ENCODE measurements at regions of chr22 and their contacts with region 1.

Region 1: GRCh38 chr22:24423519-24424000 is 3.8 kb upstream of the ADORA2A start:
- DNase-seq: peak; percentile 85
- ATAC-seq: peak; percentile 26
- H3K4me3 Mint-ChIP-seq: peak overlapping the region; percentile 68
- H3K27ac Mint-ChIP-seq: peak overlapping the region; percentile 24
- H3K4me1 Mint-ChIP-seq: peaks cover 47% of the 10 kb centered on the region
- H3K27me3 Mint-ChIP-seq: no peaks in the 10 kb centered on the region
- CTCF ChIP-seq: peak; percentile 24

Region 2: DNA sequence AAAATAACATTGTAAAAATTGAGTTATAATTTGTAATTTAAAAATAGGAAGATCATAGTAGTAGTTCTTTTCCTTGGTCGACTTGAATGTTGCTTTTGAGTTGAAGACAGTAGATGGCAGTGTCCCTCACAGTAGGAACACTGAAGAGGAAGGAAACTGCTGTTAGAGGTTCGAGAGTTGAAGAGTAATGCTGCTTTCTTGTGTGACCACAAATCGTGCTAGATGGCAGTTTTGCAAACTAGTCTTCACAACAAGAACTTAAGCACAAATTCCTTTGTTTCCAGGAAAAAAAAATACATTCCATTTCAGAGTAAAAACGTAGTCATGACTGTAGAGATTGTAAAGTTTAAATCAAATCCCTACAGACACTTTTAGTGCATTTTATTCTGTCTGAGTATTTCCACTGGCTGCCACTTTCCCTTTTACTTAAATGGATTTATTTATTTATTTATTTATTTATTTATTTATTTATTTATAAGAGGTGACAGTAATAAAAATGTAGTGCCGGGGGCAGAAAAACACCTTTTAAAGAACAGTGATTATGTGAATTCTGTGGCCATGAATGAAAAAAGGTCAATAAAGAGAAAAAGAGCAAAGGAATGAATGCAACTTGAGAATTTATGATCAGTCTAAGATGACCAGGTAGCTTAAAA is 98.3 kb before region 1 on chr22:
- CTCF ChIA-PET with region 1: interaction called, 3 read pairs
- POLR2A ChIA-PET with region 1: no interaction called
- intact Hi-C with region 1: loop called (anchors 1 kb)
- DNase-seq: no peak
- ATAC-seq: peak; percentile 88
- H3K4me3 Mint-ChIP-seq: no peak overlapping the region
- H3K27ac Mint-ChIP-seq: no peak overlapping the region
- H3K4me1 Mint-ChIP-seq: peaks cover 21% of the 10 kb centered on the region
- H3K27me3 Mint-ChIP-seq: no peaks in the 10 kb centered on the region
- CTCF ChIP-seq: peak; percentile 41

Region 3: DNA sequence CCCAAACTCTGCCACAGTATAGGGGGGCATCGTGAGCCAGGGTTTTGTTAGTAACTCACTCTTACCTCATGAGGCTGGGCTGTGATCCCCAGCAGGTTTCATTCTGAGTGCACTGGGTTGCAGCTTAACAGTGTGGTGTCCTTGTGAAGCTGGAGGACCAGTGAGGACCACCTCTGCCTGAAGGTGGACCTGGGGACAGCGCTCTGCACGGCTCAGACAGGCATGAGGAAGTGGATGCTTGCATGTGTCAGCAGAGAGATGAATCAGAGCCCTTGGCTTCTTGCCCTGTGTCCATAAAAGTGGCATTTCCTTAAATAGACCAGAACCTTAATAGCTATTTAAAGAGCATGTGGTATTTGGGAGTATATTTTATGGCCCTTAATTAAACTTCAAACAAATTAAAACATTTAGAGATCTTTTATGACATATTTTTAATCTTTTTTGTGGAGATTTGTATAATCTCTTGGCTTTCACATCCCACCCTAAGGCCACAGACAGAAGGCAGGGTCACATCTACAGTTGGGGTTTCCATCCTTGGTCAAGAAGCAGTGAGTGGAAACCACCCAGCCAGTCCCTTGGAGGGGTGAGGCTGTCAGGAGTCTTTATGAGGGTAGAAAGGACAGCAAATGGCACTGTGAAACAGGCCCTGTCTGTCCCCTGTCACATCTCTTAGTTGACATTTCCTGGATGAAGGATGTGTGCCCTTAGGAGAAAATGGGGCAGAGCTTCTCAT is 20.9 kb before region 1 on chr22:
- CTCF ChIA-PET with region 1: interaction called, 5 read pairs
- POLR2A ChIA-PET with region 1: interaction called, 3 read pairs
- intact Hi-C with region 1: loop called (anchors 2 kb)
- DNase-seq: no peak
- ATAC-seq: peak; percentile 60
- H3K4me3 Mint-ChIP-seq: peak overlapping the region; percentile 57
- H3K27ac Mint-ChIP-seq: peak overlapping the region; percentile 82
- H3K4me1 Mint-ChIP-seq: peaks cover 88% of the 10 kb centered on the region
- H3K27me3 Mint-ChIP-seq: no peaks in the 10 kb centered on the region
- CTCF ChIP-seq: no peak

Region 4: DNA sequence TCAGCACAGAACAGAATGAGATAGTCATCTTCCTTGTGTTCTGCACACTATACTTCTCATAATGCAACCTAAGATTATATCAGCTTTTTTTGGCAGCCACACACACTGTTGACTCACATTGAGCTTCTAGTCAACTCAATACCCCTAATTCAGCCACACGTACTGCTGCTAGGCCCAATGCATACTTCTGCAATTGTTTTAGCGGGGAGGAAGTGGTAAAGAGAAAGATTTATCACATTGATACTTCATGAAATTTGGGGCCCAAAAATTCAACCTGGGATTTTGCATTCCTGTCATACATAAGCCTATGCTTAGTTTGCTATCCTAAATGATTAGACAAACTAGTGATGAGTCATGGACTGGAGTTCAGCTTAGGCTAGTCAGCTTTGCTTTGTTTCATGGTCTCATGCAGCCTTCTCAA is 63.0 kb after region 1 on chr22:
- CTCF ChIA-PET with region 1: interaction called, 29 read pairs
- POLR2A ChIA-PET with region 1: interaction called, 5 read pairs
- intact Hi-C with region 1: loop called (anchors 1 kb)
- DNase-seq: no peak
- ATAC-seq: no peak
- H3K4me3 Mint-ChIP-seq: no peak overlapping the region
- H3K27ac Mint-ChIP-seq: peak overlapping the region; percentile 9
- H3K4me1 Mint-ChIP-seq: peaks cover 8% of the 10 kb centered on the region
- H3K27me3 Mint-ChIP-seq: peaks cover 2% of the 10 kb centered on the region
- CTCF ChIP-seq: no peak

Region 5: GRCh38 chr22:24503137-24503842 is 79.7 kb after region 1 on chr22:
- CTCF ChIA-PET with region 1: interaction called, 58 read pairs
- POLR2A ChIA-PET with region 1: interaction called, 21 read pairs
- intact Hi-C with region 1: loop called (anchors 1 kb)
- DNase-seq: peak; percentile 73
- ATAC-seq: peak; percentile 95
- H3K4me3 Mint-ChIP-seq: no peak overlapping the region
- H3K27ac Mint-ChIP-seq: peak overlapping the region; percentile 32
- H3K4me1 Mint-ChIP-seq: peaks cover 47% of the 10 kb centered on the region
- H3K27me3 Mint-ChIP-seq: no peaks in the 10 kb centered on the region
- CTCF ChIP-seq: peak; percentile 18

Region 6: DNA sequence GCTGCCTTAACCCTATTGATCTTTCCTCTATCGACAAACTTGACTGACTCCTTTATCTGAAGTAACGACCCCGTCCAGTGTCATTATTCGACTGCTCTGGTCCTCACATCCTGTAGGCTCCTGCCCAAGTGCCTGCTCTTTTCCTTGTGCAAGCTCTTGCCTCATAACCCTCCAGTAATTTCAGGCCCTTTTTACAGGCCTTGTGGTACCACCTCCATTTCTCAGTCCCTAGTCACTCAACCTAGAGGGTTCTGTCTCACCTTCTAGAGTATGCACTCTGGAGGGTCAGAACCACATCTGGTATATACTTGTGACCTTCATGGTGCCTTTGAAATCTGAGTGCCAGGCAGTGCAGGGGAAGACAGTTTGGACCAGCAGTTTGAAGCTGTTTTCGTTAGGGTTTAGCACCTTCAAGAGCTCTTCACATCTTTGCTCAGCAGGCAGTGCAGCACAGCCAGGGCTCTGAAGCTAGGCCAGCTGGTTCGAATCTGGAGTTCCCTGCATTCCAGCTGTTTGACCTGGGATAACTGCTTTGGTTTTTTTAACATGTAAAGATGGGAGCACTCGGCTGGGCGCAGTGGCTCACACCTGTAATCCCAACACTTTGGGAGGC is 143.4 kb after region 1 on chr22:
- CTCF ChIA-PET with region 1: no interaction called
- POLR2A ChIA-PET with region 1: no interaction called
- intact Hi-C with region 1: no loop called
- DNase-seq: no peak
- ATAC-seq: no peak
- H3K4me3 Mint-ChIP-seq: no peak overlapping the region
- H3K27ac Mint-ChIP-seq: no peak overlapping the region
- H3K4me1 Mint-ChIP-seq: peaks cover 21% of the 10 kb centered on the region
- H3K27me3 Mint-ChIP-seq: no peaks in the 10 kb centered on the region
- CTCF ChIP-seq: no peak

Region 7: DNA sequence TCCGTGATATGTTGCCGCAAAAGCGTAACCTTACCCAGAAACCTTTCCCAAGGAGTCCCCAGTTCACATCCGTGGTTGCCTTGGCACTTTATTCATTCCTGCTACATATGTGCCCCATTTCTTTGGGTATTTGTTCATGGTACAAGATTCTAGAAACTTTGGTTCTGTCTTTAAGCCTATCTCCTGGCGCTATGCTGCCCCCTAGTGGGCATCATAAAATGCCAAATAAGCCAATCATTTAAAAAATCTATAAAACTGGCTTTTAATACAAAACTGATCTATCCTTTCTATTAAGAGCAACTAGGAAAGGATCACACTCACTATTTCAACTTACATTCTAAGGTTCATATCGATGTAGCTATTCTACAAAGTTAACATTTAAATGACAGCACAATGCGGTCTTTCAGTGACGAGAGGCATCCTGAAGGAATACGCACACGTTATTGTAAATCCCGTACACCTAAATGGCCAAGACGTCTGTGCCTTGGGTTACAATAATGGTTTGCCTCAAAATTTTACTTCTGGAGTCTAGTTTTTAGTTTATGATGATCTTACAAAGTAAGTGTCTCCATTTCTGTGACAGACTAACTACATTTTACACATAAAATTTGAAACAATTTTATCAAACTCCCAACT is 334.7 kb after region 1 on chr22:
- CTCF ChIA-PET with region 1: no interaction called
- POLR2A ChIA-PET with region 1: no interaction called
- intact Hi-C with region 1: loop called (anchors 1 kb)
- DNase-seq: no peak
- ATAC-seq: no peak
- H3K4me3 Mint-ChIP-seq: no peak overlapping the region
- H3K27ac Mint-ChIP-seq: no peak overlapping the region
- H3K4me1 Mint-ChIP-seq: no peaks in the 10 kb centered on the region
- H3K27me3 Mint-ChIP-seq: peaks cover 10% of the 10 kb centered on the region
- CTCF ChIP-seq: peak; percentile 92

Region 8: GRCh38 chr22:25419237-25420113 is 995.9 kb after region 1 on chr22:
- CTCF ChIA-PET with region 1: no interaction called
- POLR2A ChIA-PET with region 1: no interaction called
- intact Hi-C with region 1: no loop called
- DNase-seq: no peak
- ATAC-seq: peak; percentile 53
- H3K4me3 Mint-ChIP-seq: peak overlapping the region; percentile 73
- H3K27ac Mint-ChIP-seq: peak overlapping the region; percentile 2
- H3K4me1 Mint-ChIP-seq: peaks cover 38% of the 10 kb centered on the region
- H3K27me3 Mint-ChIP-seq: peaks cover 36% of the 10 kb centered on the region
- CTCF ChIP-seq: no peak

Measured in activated B cell treated with CpG ODN at 0.5 μM for 24 hours (primary cell).